WTC11 (cell line): ENCODE measurements at regions of chr5 and their contacts with region 1.

Region 1: GRCh38 chr5:175729829-175730277 is 72.0 kb downstream of the HRH2 start:
- DNase-seq: peak; percentile 100
- ATAC-seq: peak; percentile 87
- H3K4me3 Mint-ChIP-seq: peak overlapping the region; percentile 74
- H3K27ac Mint-ChIP-seq: no peak overlapping the region
- H3K4me1 Mint-ChIP-seq: peaks cover 27% of the 10 kb centered on the region
- H3K27me3 Mint-ChIP-seq: peaks cover 5% of the 10 kb centered on the region
- CTCF ChIP-seq: peak; percentile 98

Region 2: GRCh38 chr5:175517818-175518450 is 211.9 kb before region 1 on chr5:
- CTCF ChIA-PET with region 1: no interaction called
- POLR2A ChIA-PET with region 1: no interaction called
- DNase-seq: no peak
- ATAC-seq: no peak
- H3K4me3 Mint-ChIP-seq: no peak overlapping the region
- H3K27ac Mint-ChIP-seq: no peak overlapping the region
- H3K4me1 Mint-ChIP-seq: no peaks in the 10 kb centered on the region
- H3K27me3 Mint-ChIP-seq: no peaks in the 10 kb centered on the region
- CTCF ChIP-seq: no peak

Region 3: DNA sequence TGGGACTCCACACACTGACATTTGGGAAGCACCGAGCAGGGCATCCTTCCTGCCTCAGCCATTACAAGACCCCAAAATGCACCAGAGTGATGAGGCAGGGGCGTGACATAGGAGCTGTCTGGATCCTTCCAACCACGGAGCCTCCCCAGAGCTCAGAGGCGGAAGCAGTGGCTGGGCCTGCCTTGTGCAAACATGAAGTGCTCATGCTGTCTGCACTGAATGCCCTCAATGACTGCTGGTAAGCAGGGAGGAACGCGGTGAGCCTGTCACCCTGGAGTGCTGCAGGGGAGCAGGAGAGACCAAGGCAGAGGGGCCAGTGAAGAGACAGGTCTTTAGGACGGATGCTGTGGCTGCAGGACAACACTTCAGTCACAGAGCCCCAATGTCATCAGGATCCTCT is 132.1 kb before region 1 on chr5:
- CTCF ChIA-PET with region 1: no interaction called
- POLR2A ChIA-PET with region 1: no interaction called
- DNase-seq: no peak
- ATAC-seq: peak; percentile 58
- H3K4me3 Mint-ChIP-seq: no peak overlapping the region
- H3K27ac Mint-ChIP-seq: no peak overlapping the region; the same call in 1 of the 2 replicates
- H3K4me1 Mint-ChIP-seq: peaks cover 31% of the 10 kb centered on the region
- H3K27me3 Mint-ChIP-seq: peaks cover 5% of the 10 kb centered on the region; the same call in 1 of the 2 replicates
- CTCF ChIP-seq: no peak

Region 4: DNA sequence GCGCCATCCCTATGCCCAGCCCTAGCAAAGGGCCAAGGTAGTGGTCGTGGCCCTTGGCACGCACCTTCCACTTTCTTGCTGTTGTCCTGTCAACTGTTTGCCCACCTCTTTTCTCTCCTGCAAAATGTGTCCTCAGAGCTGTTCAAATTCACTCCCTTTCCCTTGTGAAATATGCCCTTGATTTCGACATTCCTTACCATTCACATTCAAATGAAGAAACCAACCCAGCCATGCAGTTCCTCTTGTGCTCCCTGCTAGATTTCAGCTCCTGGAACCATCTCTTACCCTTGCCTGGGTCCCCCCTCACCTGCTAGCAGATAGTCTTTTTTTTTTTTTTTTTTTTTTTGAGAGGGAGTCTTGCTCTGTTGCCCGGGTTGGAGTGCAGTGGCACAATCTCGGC is 91.5 kb before region 1 on chr5:
- CTCF ChIA-PET with region 1: interaction called, 15 read pairs
- POLR2A ChIA-PET with region 1: no interaction called
- DNase-seq: no peak
- ATAC-seq: peak; percentile 78
- H3K4me3 Mint-ChIP-seq: no peak overlapping the region
- H3K27ac Mint-ChIP-seq: peak overlapping the region; percentile 42
- H3K4me1 Mint-ChIP-seq: peaks cover 47% of the 10 kb centered on the region
- H3K27me3 Mint-ChIP-seq: no peaks in the 10 kb centered on the region; the same call in 1 of the 2 replicates
- CTCF ChIP-seq: no peak

Region 5: DNA sequence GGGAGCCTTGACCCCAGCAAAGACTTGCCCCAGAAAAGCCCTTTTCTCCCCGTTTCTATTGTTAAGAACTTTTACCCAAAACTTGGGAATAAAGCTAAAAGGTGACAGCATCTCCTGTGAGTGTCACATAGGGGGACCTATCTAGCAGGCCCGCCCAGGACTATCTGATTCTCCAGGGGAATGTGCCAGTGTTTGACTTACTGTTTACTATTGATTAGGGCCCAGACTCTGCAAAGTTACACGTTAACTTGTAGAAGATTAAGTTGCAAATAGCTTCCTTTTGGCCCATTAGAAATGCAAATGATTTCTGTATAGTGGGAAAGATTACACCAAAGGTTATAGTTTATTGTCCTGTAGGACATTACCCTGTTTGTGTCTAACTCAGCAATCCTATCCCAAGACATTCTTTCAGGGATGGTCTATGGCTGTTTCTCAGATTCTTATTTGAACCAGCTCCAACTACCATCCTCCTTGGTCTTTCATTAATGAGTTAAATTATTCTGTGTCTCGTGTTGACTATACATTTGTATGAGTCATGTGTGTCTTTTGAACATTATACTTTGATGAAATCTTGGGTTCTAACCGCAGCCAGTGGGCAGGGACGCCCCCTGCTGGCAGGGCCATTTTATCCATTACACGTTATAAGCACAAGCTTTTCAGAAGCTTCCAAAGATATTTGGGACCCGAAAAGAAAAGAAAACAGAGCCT is 11.3 kb before region 1 on chr5:
- CTCF ChIA-PET with region 1: interaction called, 72 read pairs
- POLR2A ChIA-PET with region 1: no interaction called
- DNase-seq: peak; percentile 70
- ATAC-seq: 0 out of 2 replicates have a peak, but pooled peaks have one; percentile 34
- H3K4me3 Mint-ChIP-seq: no peak overlapping the region
- H3K27ac Mint-ChIP-seq: no peak overlapping the region
- H3K4me1 Mint-ChIP-seq: peaks cover 9% of the 10 kb centered on the region
- H3K27me3 Mint-ChIP-seq: peaks cover 3% of the 10 kb centered on the region; the same call in 1 of the 2 replicates
- CTCF ChIP-seq: peak; percentile 72

Region 6: DNA sequence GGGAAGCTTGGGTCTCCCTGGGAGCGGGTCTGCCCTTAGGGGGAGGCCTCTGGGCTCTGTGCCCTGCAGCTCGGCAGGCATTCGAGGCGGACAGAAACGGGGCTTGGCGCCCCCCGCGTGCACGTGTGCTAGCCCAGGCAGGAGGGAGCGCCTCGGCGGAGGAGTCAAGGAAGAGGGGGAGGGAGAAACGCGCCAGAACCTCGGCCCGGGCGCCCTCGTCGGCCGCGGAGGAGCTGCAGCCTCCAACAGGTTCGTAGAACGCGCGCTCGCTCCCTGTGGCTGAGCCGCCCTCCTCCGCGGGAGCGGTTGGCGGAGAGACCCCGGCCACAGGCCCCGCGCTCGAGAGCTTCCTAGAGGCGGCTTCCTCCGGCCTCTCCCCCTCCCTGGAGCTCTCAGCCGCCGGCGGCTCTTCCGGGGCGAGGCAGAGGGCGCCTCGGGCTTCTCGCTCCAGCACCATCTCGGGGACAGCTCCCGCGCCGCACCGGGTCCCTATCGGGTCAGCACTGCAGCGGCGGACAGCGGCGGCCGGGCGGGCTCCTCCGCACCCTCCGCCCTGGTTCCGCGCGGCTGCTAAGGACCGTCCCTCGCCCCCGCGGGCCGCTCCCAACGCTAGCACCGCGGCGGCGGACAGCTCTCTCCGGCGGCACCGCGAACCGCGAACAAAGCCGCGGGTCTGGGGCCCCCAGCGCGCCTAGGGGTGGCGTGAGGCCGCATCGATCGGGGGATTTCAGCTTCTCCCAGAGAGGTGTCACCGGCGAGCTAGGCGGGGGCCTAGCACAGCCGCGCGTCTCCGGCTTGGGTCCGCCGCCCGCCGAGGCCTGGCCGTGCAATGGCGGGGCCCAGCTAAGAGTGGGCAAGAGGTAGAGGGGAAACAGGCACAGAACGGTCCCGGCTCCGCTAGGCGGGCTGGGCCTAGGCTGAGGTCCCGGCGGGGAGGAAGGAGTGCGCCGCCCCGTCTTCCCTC is 67.0 kb after region 1 on chr5:
- CTCF ChIA-PET with region 1: interaction called, 115 read pairs
- POLR2A ChIA-PET with region 1: interaction called, 4 read pairs
- DNase-seq: peak; percentile 94
- ATAC-seq: peak; percentile 88
- H3K4me3 Mint-ChIP-seq: peak overlapping the region; percentile 80
- H3K27ac Mint-ChIP-seq: no peak overlapping the region
- H3K4me1 Mint-ChIP-seq: peaks cover 33% of the 10 kb centered on the region
- H3K27me3 Mint-ChIP-seq: peaks cover 35% of the 10 kb centered on the region
- CTCF ChIP-seq: no peak

Region 7: DNA sequence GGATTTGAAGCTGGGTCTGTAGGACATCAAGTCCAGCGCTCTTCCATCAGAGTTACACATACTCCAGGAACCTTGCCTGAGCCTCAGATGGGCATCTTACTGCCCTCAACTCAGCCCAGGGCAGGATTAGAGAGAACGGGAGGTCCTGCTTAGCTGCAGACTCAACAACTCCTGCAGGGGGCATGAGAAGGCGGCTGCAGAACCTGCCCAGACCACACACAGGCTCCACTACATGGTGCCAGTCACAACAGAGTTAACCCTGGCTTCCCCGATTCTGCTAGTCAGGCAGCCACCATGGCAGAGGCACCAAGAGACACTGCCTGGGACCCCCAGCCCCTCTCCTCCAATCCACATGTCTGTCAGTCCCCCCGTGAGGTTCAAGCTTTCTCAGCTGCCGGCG is 117.7 kb after region 1 on chr5:
- CTCF ChIA-PET with region 1: interaction called, 15 read pairs
- POLR2A ChIA-PET with region 1: no interaction called
- DNase-seq: peak; percentile 49
- ATAC-seq: peak; percentile 90
- H3K4me3 Mint-ChIP-seq: no peak overlapping the region
- H3K27ac Mint-ChIP-seq: no peak overlapping the region
- H3K4me1 Mint-ChIP-seq: peaks cover 21% of the 10 kb centered on the region
- H3K27me3 Mint-ChIP-seq: no peaks in the 10 kb centered on the region
- CTCF ChIP-seq: peak; percentile 15; the same call in 1 of the 2 replicates

Region 8: GRCh38 chr5:175895215-175896102 is 165.6 kb after region 1 on chr5:
- CTCF ChIA-PET with region 1: interaction called, 41 read pairs
- POLR2A ChIA-PET with region 1: no interaction called
- DNase-seq: no peak
- ATAC-seq: peak; percentile 27
- H3K4me3 Mint-ChIP-seq: no peak overlapping the region
- H3K27ac Mint-ChIP-seq: no peak overlapping the region
- H3K4me1 Mint-ChIP-seq: peaks cover 11% of the 10 kb centered on the region
- H3K27me3 Mint-ChIP-seq: no peaks in the 10 kb centered on the region
- CTCF ChIP-seq: no peak

Region 9: GRCh38 chr5:176447982-176448608 is 718.2 kb after region 1 on chr5 and contains the start of gene FAF2:
- CTCF ChIA-PET with region 1: interaction called, 10 read pairs
- POLR2A ChIA-PET with region 1: interaction called, 3 read pairs
- DNase-seq: peak; percentile 97
- ATAC-seq: peak; percentile 98
- H3K4me3 Mint-ChIP-seq: peak within 1 kb of the TSS; percentile 94
- H3K27ac Mint-ChIP-seq: peak within 1 kb of the TSS; percentile 100
- H3K4me1 Mint-ChIP-seq: peaks cover 16% of the 10 kb centered on the region
- H3K27me3 Mint-ChIP-seq: no peaks in the 10 kb centered on the region; the same call in 1 of the 2 replicates
- CTCF ChIP-seq: peak; percentile 88
- total RNA-seq, gene FAF2: 31.9 to 32.9 TPM (median 32.1 TPM) in 3 replicates